Dendritic cell treated with granulocyte-macrophage colony-stimulating factor and Interleukin-4, amounts not matched to agents 40 ng/mL and 50 ng/mL, for 4 days (primary cell): ENCODE measurements at regions of chr13 and their contacts with region 1.

Region 1: DNA sequence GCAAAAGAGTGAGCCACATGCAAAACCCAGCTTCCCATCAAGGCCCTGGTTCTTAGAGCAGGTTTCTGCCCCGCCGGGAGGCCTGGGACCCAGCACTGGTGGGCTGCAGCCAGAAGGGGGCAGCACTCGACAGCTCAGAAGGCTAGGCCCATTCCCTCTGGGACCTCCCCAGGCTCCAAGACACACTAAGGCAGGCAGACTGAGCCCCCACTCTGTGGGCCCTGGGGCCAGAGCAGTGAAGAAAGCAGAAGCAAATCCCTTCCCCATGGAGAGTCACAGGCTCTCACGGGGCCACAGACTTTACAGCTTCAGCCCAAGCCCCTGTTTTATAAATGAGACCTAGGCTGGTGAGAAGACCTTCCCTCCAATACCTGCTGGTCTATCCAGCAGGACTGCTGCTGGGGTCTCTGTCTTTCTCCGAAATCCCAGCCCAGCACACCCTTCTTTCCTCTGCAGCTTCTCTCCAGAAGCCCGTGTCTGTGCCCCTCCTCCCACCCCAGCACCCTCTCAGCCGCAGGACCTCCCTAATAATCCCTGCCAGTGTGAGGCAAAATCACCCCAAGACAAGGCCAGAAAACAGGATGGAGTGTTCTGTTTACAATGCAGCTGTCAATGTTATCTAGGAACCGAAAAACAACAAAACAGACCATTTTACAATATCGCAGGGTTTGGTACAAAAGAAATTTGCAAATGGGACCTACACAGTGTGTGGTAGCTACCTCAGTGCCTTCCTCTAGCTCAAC is 109.3 kb downstream of the ABCC4 start:
- H3K4me3 Mint-ChIP-seq: no peak overlapping the region
- H3K27ac Mint-ChIP-seq: peak overlapping the region; percentile 43
- H3K4me1 Mint-ChIP-seq: peaks cover 8% of the 10 kb centered on the region
- H3K27me3 Mint-ChIP-seq: no peaks in the 10 kb centered on the region

Region 2: DNA sequence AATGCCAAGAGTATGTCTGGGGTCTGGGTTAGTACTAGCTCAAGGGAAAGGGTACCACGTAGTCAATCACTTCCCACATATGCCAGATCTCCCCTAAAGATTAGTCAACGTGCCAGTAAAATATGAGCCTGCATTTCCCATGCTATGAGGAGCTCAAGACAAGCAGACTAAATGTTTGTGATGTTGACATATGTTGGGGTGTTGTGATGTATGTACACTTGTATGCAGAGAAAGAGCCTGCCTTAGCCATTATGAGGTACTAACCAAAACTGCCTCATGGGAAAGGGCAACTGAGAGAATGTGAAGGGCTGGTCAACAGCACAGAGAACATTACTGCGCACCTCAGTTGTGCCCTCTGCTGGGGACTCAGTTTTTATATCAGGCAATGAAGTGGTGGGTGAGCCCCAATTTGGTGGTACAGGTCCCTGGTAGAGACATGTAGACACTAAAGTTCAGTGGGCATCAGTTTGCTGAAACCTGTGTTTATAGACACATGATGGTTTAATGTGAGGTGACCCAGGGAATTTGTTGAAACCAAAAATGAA is 999.5 kb before region 1 on chr13:
- intact Hi-C with region 1: no loop called
- H3K4me3 Mint-ChIP-seq: no peak overlapping the region
- H3K27ac Mint-ChIP-seq: no peak overlapping the region
- H3K4me1 Mint-ChIP-seq: peaks cover 5% of the 10 kb centered on the region
- H3K27me3 Mint-ChIP-seq: no peaks in the 10 kb centered on the region

Region 3: DNA sequence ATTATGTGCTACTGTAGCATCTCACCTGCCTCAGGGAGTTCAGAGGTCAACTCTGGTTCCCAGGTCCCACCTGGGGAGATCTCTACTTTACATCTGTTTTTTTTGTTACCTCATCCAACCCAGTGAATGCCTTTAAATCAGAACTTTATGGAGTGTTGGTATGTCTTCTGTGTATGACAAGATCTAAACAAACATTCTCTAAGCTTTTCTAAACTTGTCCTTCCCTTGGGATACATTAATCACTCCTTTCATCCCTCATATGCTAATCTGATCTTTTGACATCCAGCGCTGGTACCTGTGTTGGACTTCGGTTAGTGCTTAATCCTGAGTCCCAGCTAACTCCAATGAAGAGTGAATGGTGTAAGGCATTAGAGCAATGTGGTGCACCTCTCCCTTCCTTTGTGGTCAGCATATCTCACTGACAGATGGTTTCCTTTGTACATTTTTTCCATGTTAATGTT is 104.2 kb before region 1 on chr13:
- intact Hi-C with region 1: no loop called
- H3K4me3 Mint-ChIP-seq: no peak overlapping the region
- H3K27ac Mint-ChIP-seq: no peak overlapping the region
- H3K4me1 Mint-ChIP-seq: no peaks in the 10 kb centered on the region
- H3K27me3 Mint-ChIP-seq: no peaks in the 10 kb centered on the region

Region 4: DNA sequence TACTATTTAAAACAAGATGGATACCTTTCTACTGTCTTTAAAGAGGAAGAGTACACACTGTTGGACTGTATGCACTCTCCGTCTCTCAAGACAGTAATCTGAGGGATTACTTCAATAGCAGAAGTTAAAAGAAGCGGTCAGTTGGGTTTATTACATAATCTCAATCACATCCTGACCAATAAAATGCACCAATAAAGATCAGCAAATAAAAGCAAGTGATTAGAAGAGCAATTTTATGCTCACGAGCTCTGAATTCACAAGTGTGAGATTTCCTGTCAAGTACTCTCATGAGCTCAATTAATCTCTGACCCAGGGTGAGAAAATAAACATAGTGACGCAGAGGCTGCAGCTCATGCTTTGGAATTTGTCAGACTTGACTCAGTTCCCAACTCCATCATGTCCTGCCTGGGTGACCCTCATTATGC is 97.0 kb after region 1 on chr13:
- intact Hi-C with region 1: loop called (anchors 1 kb)
- H3K4me3 Mint-ChIP-seq: no peak overlapping the region
- H3K27ac Mint-ChIP-seq: no peak overlapping the region
- H3K4me1 Mint-ChIP-seq: peaks cover 50% of the 10 kb centered on the region
- H3K27me3 Mint-ChIP-seq: no peaks in the 10 kb centered on the region

Region 5: DNA sequence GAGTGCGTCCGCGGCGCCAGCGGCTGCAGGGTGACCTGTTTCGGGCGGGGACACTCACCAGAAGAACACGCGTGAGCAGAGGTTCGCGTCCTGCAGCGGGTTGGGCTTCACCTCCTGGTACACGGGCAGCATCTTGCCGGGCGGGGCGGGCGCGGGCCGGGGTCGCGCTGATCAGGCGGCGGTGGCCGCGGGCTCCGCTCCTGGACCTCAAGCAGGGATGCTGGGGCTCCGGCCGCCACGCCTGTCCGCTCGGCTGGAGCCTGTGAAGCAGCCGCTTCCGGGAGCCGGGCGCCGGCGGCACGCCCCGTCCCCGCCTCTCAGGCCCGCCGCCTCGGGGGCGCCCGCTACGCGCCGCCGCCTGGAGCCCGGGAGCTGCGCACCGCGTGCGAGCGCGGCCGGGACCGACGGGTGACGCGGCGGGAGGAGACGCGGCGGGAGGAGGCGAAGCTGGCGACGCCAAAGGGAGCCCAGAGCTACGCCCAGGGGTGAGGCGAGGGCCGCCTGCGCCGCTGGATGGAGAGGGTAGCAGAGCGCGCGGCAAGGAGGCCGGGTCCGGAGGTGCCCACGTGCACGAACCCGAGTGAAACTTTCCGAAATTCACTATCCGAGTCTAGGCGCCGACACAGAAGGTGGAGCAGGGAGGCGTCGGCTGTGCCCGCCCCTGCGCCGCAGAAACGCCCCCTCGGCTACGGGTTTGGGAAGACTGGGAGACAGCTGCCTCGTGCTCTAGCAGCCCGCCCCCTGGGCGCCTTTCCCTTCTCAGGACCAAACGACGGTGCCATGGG is 109.4 kb after region 1 on chr13 and contains the start of gene ABCC4:
- intact Hi-C with region 1: loop called (anchors 2 kb)
- H3K4me3 Mint-ChIP-seq: peak within 1 kb of the TSS; percentile 80
- H3K27ac Mint-ChIP-seq: peak within 1 kb of the TSS; percentile 75
- H3K4me1 Mint-ChIP-seq: peaks cover 36% of the 10 kb centered on the region
- H3K27me3 Mint-ChIP-seq: peaks cover 12% of the 10 kb centered on the region

Region 6: DNA sequence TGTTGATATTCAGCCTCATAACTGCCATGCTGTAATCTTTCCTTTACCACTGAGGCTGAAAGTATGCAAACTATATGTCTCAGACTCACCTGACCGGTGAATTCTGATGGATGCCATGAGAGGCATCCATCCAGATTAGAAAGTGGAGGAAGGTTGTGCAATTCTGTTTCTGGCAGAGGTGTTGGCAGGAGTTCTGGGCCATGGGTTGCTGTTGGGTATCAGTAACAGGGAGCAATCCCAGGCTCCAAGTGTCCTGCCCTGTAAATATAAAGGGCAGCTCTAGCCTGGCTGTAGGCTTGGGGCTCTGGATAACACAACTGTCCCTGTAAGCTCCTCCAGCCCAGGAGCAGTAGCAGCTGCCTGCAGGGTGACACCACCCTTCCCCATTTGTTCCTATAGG is 186.6 kb after region 1 on chr13:
- intact Hi-C with region 1: loop called (anchors 1 kb)
- H3K4me3 Mint-ChIP-seq: no peak overlapping the region
- H3K27ac Mint-ChIP-seq: no peak overlapping the region
- H3K4me1 Mint-ChIP-seq: peaks cover 12% of the 10 kb centered on the region
- H3K27me3 Mint-ChIP-seq: peaks cover 5% of the 10 kb centered on the region

Region 7: GRCh38 chr13:95403828-95404522 is 212.0 kb after region 1 on chr13:
- intact Hi-C with region 1: loop called (anchors 1 kb)
- H3K4me3 Mint-ChIP-seq: peak overlapping the region; percentile 58
- H3K27ac Mint-ChIP-seq: no peak overlapping the region
- H3K4me1 Mint-ChIP-seq: peaks cover 19% of the 10 kb centered on the region
- H3K27me3 Mint-ChIP-seq: peaks cover 17% of the 10 kb centered on the region

Region 8: DNA sequence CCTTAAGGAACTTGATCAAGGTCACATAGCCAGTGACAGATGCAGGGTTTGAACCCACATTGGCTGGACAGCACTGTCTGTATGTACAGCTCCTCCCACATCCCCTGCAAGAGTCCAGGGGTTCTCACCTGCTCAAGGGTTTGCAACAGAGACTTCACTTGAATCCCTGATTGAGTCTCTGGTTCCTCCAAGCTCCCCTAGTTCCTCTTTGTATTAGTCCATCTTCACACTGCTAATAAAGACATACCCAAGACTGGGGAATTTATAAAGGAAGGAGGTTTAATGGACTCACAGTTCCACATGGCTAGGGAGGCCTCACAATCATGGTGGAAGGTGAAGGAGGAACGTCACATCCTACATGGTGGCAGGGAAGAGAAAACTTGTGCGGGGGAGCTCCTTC is 287.7 kb after region 1 on chr13:
- intact Hi-C with region 1: loop called (anchors 2 kb)
- H3K4me3 Mint-ChIP-seq: peak overlapping the region; percentile 30
- H3K27ac Mint-ChIP-seq: peak overlapping the region; percentile 88
- H3K4me1 Mint-ChIP-seq: peaks cover 28% of the 10 kb centered on the region
- H3K27me3 Mint-ChIP-seq: peaks cover 14% of the 10 kb centered on the region